CD4-positive, alpha-beta T cell (primary cell): ENCODE measurements at regions of chr17 and their contacts with region 1.

Region 1: GRCh38 chr17:4074831-4075495 is 67.9 kb downstream of the ZZEF1 start:
- DNase-seq: peak in 4 of 14 experiments; percentile 20 to 75 (median 67)
- ATAC-seq: peak; percentile 85
- H3K4me3 ChIP-seq: no peak overlapping the region
- H3K4me3 Mint-ChIP-seq: no peak overlapping the region
- H3K27ac ChIP-seq: no peak overlapping the region
- H3K27ac Mint-ChIP-seq: no peak overlapping the region
- H3K4me1 ChIP-seq: no peaks in the 10 kb centered on the region
- H3K4me1 Mint-ChIP-seq: no peaks in the 10 kb centered on the region
- H3K27me3 ChIP-seq: no peaks in the 10 kb centered on the region
- H3K27me3 Mint-ChIP-seq: no peaks in the 10 kb centered on the region
- CTCF ChIP-seq: peak; percentile 67

Region 2: DNA sequence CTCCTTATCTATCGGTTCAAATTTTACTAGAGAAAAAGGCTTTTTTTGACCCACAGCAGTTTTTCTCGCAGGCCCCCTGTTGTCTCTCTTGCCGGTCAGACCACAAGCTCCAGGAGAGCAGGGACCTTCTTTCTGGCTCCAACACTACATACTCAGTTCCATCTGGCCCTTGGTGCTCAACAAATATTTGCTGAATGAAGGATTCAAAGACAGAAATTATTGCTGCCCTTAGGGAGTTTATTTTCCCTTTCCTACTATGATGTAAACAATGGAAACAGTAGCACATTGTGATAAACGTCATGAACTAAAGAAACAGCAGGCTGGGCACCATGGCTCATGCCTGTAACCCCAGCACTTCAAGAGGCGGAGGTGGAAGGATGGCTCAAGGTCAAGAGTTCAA is 51.7 kb before region 1 on chr17:
- CTCF ChIA-PET with region 1: no interaction called
- POLR2A ChIA-PET with region 1: no interaction called
- intact Hi-C with region 1: loop called in 1 of 2 experiments (anchors 5 kb)
- DNase-seq: no peak
- ATAC-seq: no peak
- H3K4me3 ChIP-seq: no peak overlapping the region
- H3K4me3 Mint-ChIP-seq: no peak overlapping the region
- H3K27ac ChIP-seq: no peak overlapping the region
- H3K27ac Mint-ChIP-seq: no peak overlapping the region
- H3K4me1 ChIP-seq: no peaks in the 10 kb centered on the region
- H3K4me1 Mint-ChIP-seq: no peaks in the 10 kb centered on the region
- H3K27me3 ChIP-seq: no peaks in the 10 kb centered on the region
- H3K27me3 Mint-ChIP-seq: no peaks in the 10 kb centered on the region
- CTCF ChIP-seq: no peak